Vagina (tissue), 2 donors: ENCODE measurements at regions of chr11 and their contacts with region 1.

Region 1: GRCh38 chr11:11444027-11444803 is 91.2 kb upstream of the CSNK2A3 start:
- DNase-seq: no peak
- H3K4me3 ChIP-seq: no peak overlapping the region
- H3K27ac ChIP-seq: no peak overlapping the region
- H3K4me1 ChIP-seq: peaks cover 10% of the 10 kb centered on the region
- H3K27me3 ChIP-seq: no peaks in the 10 kb centered on the region
- CTCF ChIP-seq: no peak
- POLR2A ChIP-seq: no peak

Region 2: GRCh38 chr11:9992306-9992705 is 1451.9 kb before region 1 on chr11:
- intact Hi-C with region 1: no loop called
- DNase-seq: no peak
- H3K4me3 ChIP-seq: no peak overlapping the region
- H3K27ac ChIP-seq: no peak overlapping the region
- H3K4me1 ChIP-seq: no peaks in the 10 kb centered on the region
- H3K27me3 ChIP-seq: no peaks in the 10 kb centered on the region
- CTCF ChIP-seq: no peak
- POLR2A ChIP-seq: no peak

Region 3: GRCh38 chr11:11510939-11511338 is 66.7 kb after region 1 on chr11:
- intact Hi-C with region 1: no loop called
- DNase-seq: no peak
- H3K4me3 ChIP-seq: no peak overlapping the region
- H3K27ac ChIP-seq: no peak overlapping the region
- H3K4me1 ChIP-seq: peaks cover 16% of the 10 kb centered on the region
- H3K27me3 ChIP-seq: no peaks in the 10 kb centered on the region
- CTCF ChIP-seq: no peak
- POLR2A ChIP-seq: no peak

Region 4: DNA sequence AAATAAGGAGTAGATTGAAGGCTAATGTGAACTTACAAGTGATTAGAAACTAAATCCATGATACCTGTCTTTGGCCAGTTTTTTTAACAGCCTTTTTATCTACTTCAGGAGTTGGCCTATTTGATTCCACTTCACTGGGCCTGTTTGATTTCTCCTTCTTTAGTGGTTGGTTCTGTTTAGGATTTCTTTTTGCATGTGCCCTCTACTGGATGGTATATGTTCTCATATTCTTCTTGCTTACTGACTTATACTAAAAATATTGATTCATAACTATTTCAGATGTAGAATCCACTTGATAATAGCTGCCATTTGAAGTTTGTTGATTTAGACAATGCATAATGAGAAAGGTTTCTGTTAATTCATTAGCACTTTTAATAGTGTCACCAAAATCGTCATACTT is 451.5 kb after region 1 on chr11:
- intact Hi-C with region 1: no loop called
- DNase-seq: no peak
- H3K4me3 ChIP-seq: no peak overlapping the region
- H3K27ac ChIP-seq: no peak overlapping the region
- H3K4me1 ChIP-seq: no peaks in the 10 kb centered on the region
- H3K27me3 ChIP-seq: no peaks in the 10 kb centered on the region
- CTCF ChIP-seq: no peak
- POLR2A ChIP-seq: no peak

Region 5: DNA sequence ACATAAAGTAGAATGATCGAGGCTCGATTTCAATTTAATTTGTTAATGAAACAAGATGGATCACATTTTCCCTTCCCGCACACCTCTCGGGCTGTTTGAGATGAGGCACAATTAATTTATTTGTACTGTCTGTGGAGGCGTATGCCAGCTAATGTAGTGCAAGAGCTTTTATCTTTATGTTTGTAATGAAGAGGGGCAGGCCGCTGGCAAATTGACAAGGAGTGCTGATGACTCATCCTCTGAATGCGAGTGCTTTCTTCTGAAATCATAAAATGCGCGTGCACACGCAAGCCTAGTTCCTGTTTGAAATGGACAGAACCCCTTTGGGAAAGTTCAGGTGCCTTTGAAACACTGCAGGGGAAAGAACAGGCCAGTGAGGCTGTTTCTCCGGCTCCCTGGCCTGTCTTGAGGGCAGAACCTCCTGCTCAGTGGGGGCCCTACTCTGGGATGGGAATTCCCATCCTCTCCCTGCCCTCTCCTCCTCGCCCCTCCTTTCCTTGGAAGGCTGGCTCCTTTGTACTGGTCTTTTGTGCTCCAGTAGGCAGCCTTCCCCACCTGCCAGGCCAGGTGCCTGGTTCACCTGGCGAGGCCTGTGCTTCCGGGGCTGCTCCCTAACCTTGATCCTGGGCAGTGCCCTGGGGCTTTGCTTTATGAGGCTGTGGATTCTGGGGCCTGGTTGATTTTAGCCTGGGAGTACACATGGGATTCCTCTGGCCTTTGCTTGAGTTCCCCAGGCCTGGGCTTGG is 1280.3 kb after region 1 on chr11:
- intact Hi-C with region 1: loop called (anchors 10 kb)
- DNase-seq: no peak
- H3K4me3 ChIP-seq: no peak overlapping the region
- H3K27ac ChIP-seq: peak overlapping the region; percentile 73
- H3K4me1 ChIP-seq: peaks cover 56% of the 10 kb centered on the region
- H3K27me3 ChIP-seq: no peaks in the 10 kb centered on the region
- CTCF ChIP-seq: no peak
- POLR2A ChIP-seq: no peak